ENCODE measurements at regions of chr9 and their contacts with region 1.

Region 1: DNA sequence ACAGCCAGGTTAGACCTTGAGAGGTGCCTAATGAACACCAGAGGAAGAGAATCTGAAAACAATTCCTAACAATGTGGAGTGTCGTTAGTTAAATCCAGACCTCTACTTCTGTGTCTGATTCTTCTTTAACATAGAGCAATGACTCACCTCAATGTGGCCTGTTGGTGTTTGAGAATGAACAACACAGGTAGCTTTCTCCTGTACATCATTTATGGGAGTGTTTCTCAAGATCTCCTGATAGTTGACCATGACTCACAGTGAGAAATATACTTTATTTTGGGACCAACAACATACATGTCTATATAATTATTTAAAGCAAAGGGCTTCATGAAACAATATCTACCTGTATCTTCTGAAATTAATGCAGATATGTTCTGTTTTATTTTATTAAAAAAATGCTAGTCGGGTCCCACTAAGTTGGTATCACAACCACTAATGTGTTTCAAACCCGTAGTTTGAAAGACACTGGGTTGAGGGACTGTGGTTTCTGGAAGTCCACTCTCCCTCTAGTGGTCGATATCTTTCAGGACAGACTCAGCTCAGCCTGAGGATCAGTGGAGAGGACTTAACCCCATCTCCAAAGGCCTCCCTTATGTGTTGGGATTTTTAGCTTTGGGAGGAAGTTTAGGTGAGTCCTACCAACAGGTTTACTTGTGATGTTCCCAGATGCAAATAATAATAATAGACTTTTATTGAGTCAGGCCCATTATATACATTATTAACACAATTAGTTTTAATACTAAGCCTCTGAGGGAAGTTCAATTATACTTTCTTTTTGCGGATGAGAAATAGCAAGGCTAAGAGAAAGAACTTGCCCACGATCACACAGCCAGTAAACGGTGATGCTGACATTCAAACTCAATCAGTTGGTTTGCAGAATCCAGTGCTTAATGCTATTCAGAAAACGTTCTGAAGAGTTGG is 70.0 kb upstream of the KLF9 start:
- DNase-seq: no peak
- ATAC-seq: peak; percentile 94
- H3K4me3 ChIP-seq: no peak overlapping the region
- H3K27ac ChIP-seq: no peak overlapping the region
- H3K4me1 ChIP-seq: no peaks in the 10 kb centered on the region
- H3K27me3 ChIP-seq: peaks cover 0 to 4% of the 10 kb centered on the region in 2 experiments; a peak in 1 of 4 replicates
- CTCF ChIP-seq: peak; percentile 43 to 69 (median 65)
- EP300 ChIP-seq: no peak
- POLR2A ChIP-seq: no peak
- RAD21 ChIP-seq: peak; percentile 55

Region 2: GRCh38 chr9:70340572-70340971 is 143.9 kb before region 1 on chr9:
- CTCF ChIA-PET with region 1: interaction called, 30 read pairs
- POLR2A ChIA-PET with region 1: no interaction called
- RAD21 ChIA-PET with region 1: interaction called, 4 read pairs
- SMC1A ChIA-PET with region 1: interaction called, 6 read pairs
- in situ Hi-C with region 1: loop called (anchors 5 kb)
- intact Hi-C with region 1: loop called (anchors 1 kb)
- DNase-seq: no peak
- ATAC-seq: no peak
- H3K4me3 ChIP-seq: no peak overlapping the region
- H3K27ac ChIP-seq: no peak overlapping the region
- H3K4me1 ChIP-seq: no peaks in the 10 kb centered on the region
- H3K27me3 ChIP-seq: no peaks in the 10 kb centered on the region
- CTCF ChIP-seq: peak in 1 of 3 experiments; percentile 33; a peak in 2 of 6 replicates
- EP300 ChIP-seq: no peak
- POLR2A ChIP-seq: no peak
- RAD21 ChIP-seq: peak; percentile 45

Region 3: GRCh38 chr9:70347046-70347445 is 137.4 kb before region 1 on chr9:
- CTCF ChIA-PET with region 1: interaction called, 3 read pairs
- POLR2A ChIA-PET with region 1: no interaction called
- RAD21 ChIA-PET with region 1: no interaction called
- SMC1A ChIA-PET with region 1: interaction called, 3 read pairs
- in situ Hi-C with region 1: loop called (anchors 5 kb)
- intact Hi-C with region 1: no loop called
- DNase-seq: no peak
- ATAC-seq: no peak
- H3K4me3 ChIP-seq: no peak overlapping the region
- H3K27ac ChIP-seq: no peak overlapping the region
- H3K4me1 ChIP-seq: no peaks in the 10 kb centered on the region
- H3K27me3 ChIP-seq: no peaks in the 10 kb centered on the region
- CTCF ChIP-seq: no peak
- EP300 ChIP-seq: no peak
- POLR2A ChIP-seq: no peak
- RAD21 ChIP-seq: no peak

Region 4: GRCh38 chr9:70408393-70409040 is 76.0 kb before region 1 on chr9:
- CTCF ChIA-PET with region 1: no interaction called
- POLR2A ChIA-PET with region 1: no interaction called
- RAD21 ChIA-PET with region 1: no interaction called
- SMC1A ChIA-PET with region 1: no interaction called
- in situ Hi-C with region 1: no loop called
- intact Hi-C with region 1: no loop called
- DNase-seq: no peak
- ATAC-seq: no peak
- H3K4me3 ChIP-seq: no peak overlapping the region
- H3K27ac ChIP-seq: no peak overlapping the region
- H3K4me1 ChIP-seq: peaks cover 24% of the 10 kb centered on the region
- H3K27me3 ChIP-seq: no peaks in the 10 kb centered on the region
- CTCF ChIP-seq: no peak
- EP300 ChIP-seq: no peak
- POLR2A ChIP-seq: no peak
- RAD21 ChIP-seq: no peak

Region 5: GRCh38 chr9:70419546-70420266 is 64.8 kb before region 1 on chr9:
- CTCF ChIA-PET with region 1: interaction called, 3 read pairs
- POLR2A ChIA-PET with region 1: no interaction called
- RAD21 ChIA-PET with region 1: interaction called, 4 read pairs
- SMC1A ChIA-PET with region 1: interaction called, 4 read pairs
- in situ Hi-C with region 1: no loop called
- intact Hi-C with region 1: loop called (anchors 10 kb)
- DNase-seq: peak; percentile 47
- ATAC-seq: peak; percentile 72
- H3K4me3 ChIP-seq: peak overlapping the region; percentile 56
- H3K27ac ChIP-seq: peak overlapping the region; percentile 22
- H3K4me1 ChIP-seq: peaks cover 14% of the 10 kb centered on the region
- H3K27me3 ChIP-seq: no peaks in the 10 kb centered on the region
- CTCF ChIP-seq: no peak
- EP300 ChIP-seq: peak in 1 of 2 experiments; percentile 15; a peak in 1 of 4 replicates
- POLR2A ChIP-seq: peak; percentile 74
- RAD21 ChIP-seq: no peak

Region 6: DNA sequence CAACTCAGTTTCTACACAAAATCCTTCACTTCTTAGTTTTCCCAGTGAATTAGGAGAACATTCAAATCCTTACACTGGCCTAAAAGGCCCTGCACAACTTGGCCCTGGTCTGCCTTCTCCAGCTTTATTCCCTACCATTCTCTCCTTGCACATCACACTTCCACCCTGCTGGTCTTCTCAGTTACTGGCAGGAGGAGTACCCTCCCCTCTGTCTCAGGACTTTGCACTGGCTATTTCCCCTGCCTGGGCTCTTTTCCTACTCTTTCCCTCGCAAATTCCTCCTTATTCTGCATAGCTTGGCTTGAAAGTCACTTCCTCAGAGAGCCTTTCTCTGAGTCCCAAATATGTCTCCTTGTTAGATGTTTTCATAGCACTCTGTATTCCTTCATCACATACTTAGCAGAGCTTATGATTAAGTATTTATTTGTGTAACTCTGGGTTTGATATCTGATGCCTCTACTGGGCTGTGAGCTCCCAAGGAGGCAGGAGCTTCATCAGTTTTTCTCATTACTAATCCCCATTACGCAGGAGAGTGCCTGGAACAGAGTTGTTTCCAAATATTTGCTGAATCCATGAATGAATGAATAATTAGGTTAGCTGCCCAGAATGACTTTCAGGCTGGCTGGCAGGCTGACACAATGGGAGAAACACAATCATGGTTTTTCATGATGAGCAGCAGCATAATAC is 89.8 kb after region 1 on chr9:
- CTCF ChIA-PET with region 1: interaction called, 12 read pairs
- POLR2A ChIA-PET with region 1: no interaction called
- RAD21 ChIA-PET with region 1: no interaction called
- SMC1A ChIA-PET with region 1: no interaction called
- in situ Hi-C with region 1: no loop called
- intact Hi-C with region 1: no loop called
- DNase-seq: no peak
- ATAC-seq: no peak
- H3K4me3 ChIP-seq: no peak overlapping the region
- H3K27ac ChIP-seq: no peak overlapping the region
- H3K4me1 ChIP-seq: no peaks in the 10 kb centered on the region
- H3K27me3 ChIP-seq: no peaks in the 10 kb centered on the region
- CTCF ChIP-seq: no peak
- EP300 ChIP-seq: no peak
- POLR2A ChIP-seq: no peak
- RAD21 ChIP-seq: no peak

Measured in GM12878 (cell line).